OCI-LY7 (cell line): ENCODE measurements at regions of chr7 and their contacts with region 1.

Region 1: GRCh38 chr7:44403176-44403759 is 77.9 kb upstream of the CAMK2B start:
- DNase-seq: no peak
- H3K4me3 ChIP-seq: no peak overlapping the region
- H3K27ac ChIP-seq: no peak overlapping the region
- H3K4me1 ChIP-seq: no peaks in the 10 kb centered on the region
- CTCF ChIP-seq: no peak

Region 2: GRCh38 chr7:44059219-44060090 is 343.8 kb before region 1 on chr7:
- CTCF ChIA-PET with region 1: no interaction called
- POLR2A ChIA-PET with region 1: no interaction called
- intact Hi-C with region 1: no loop called
- DNase-seq: no peak
- H3K4me3 ChIP-seq: no peak overlapping the region
- H3K27ac ChIP-seq: peak overlapping the region; percentile 59
- H3K4me1 ChIP-seq: peaks cover 24% of the 10 kb centered on the region
- CTCF ChIP-seq: no peak

Region 3: DNA sequence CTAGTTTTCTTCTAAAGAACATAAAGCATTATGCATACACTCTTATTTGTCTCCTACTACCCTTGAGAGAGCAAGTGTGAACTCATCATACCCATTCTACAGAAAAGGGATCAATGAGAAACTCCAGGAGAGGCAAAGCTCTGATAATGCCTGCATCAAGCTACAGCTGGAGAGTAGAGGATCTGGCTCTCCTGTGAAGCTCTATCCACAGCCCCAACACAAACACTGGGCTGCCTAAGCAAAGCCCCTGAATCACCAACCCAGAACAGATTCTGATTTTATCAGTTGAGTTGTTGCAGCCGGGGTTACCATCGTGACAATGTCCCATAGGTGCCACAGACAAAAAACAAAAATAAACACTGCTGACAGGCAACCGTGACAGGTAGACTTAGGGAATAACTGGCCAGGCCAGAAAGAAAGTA is 12.3 kb after region 1 on chr7:
- CTCF ChIA-PET with region 1: no interaction called
- POLR2A ChIA-PET with region 1: interaction called, 10 read pairs
- intact Hi-C with region 1: no loop called
- DNase-seq: no peak
- H3K4me3 ChIP-seq: no peak overlapping the region
- H3K27ac ChIP-seq: no peak overlapping the region
- H3K4me1 ChIP-seq: peaks cover 13% of the 10 kb centered on the region
- CTCF ChIP-seq: no peak